ENCODE measurements at regions of chr7 and their contacts with region 1.

Region 1: DNA sequence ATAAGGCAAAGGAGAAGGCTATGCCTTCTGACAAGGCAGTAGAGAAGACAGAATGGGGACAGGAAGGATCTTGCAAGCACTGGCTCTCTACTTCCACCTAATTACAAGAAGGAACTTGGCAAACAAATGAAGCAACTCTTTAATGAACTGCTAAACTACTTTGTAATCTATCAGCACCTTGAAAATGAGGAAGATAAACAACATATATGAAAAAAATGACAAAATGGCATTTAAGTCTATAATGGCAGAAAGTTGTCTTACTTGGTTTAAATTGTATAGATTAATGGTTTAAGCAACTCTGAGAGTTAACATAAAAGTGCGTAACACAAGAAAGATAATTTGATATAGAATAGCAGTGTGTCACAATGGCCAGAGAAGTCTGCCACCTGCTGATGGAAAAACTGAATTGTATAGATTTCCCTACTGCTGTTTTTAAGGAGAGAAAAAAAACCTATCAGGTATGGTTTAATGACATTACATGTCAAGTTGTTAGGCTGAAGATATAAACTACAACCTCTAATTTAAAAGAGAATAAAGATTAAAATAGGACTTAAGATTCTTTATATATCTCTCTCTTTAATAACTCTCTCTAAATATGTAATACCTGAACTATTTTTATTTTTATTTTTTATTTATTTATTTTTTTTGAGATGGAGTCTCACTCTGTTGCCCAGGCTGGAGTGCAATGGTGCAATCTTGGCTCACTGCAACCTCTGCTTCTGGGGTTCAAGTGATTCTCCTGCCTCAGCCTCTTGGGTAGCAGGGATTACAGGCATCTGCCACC is 11.8 kb downstream of the NT5C3A start:
- DNase-seq: no peak
- ATAC-seq: peak in 6 of 8 donors; percentile 52 to 70 (median 62)
- H3K4me3 ChIP-seq: peak overlapping the region in 3 of 10 donors; percentile 9 to 28 (median 26)
- H3K27ac ChIP-seq: peak overlapping the region in 6 of 10 donors; percentile 14 to 77 (median 56)
- H3K4me1 ChIP-seq: peaks cover 0 to 59% (median 24%) of the 10 kb centered on the region in 9 donors
- H3K27me3 ChIP-seq: no peaks in the 10 kb centered on the region
- CTCF ChIP-seq: peak; percentile 24 to 80 (median 72)

Region 2: DNA sequence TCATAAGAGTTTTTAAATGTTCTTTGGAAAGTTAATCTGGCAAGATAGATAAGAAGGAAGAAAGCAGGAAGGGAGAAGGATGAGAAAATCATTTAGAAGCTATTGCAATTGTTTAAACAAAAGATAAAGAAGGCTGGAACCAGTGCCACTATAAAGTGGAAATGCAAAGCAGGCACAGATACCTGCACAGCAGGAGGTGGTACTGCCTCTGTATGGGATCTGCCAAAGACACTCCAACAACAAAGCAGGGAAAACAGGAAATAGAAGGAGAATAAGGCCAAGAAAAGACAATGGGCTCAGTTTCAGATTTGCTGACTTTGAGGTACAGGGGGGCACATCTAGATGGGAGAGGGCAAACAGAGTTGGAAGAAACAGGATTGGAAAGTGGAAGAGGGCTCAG is 1225.2 kb before region 1 on chr7:
- intact Hi-C with region 1: no loop called
- DNase-seq: no peak
- ATAC-seq: no peak
- H3K4me3 ChIP-seq: no peak overlapping the region
- H3K27ac ChIP-seq: no peak overlapping the region
- H3K4me1 ChIP-seq: peaks cover 0 to 9% (median 0%) of the 10 kb centered on the region in 9 donors
- H3K27me3 ChIP-seq: no peaks in the 10 kb centered on the region
- CTCF ChIP-seq: no peak

Region 3: GRCh38 chr7:32761451-32762205 is 289.1 kb before region 1 on chr7:
- intact Hi-C with region 1: loop called in 1 of 10 experiments (anchors 10 kb)
- DNase-seq: peak in 1 of 2 donors; percentile 18
- ATAC-seq: peak in 6 of 8 donors; percentile 10 to 86 (median 33)
- H3K4me3 ChIP-seq: peak overlapping the region in 1 of 10 donors; percentile 3
- H3K27ac ChIP-seq: peak overlapping the region in 7 of 10 donors; percentile 37 to 82 (median 57)
- H3K4me1 ChIP-seq: peaks cover 0 to 14% (median 5%) of the 10 kb centered on the region in 9 donors
- H3K27me3 ChIP-seq: peaks cover 0 to 26% (median 0%) of the 10 kb centered on the region in 7 donors
- CTCF ChIP-seq: no peak

Region 4: DNA sequence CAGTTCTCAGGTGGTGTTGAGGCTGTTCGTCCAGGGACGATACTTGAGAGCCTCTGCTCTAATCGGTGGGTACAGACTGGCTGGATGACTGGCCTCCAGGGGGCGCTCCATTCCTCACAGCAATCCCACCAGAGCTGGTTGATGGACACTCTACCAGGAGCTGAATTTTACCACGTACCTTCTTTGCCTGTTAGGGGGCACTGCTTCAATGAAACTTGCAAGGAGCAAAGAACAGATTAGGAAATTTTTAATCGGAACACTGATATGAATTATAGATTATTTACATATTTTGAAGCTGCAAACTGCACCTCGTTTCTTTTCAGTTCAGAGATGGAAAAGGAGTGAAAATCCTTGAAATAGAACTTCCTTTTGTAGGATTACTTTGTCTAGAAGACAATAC is 204.0 kb before region 1 on chr7:
- intact Hi-C with region 1: loop called in 1 of 10 experiments (anchors 5 kb)
- DNase-seq: peak; percentile 81 to 91
- ATAC-seq: peak; percentile 96 to 100 (median 98)
- H3K4me3 ChIP-seq: peak overlapping the region in 4 of 10 donors; percentile 3 to 16 (median 10)
- H3K27ac ChIP-seq: no peak overlapping the region
- H3K4me1 ChIP-seq: peaks cover 0 to 10% (median 3%) of the 10 kb centered on the region in 9 donors
- H3K27me3 ChIP-seq: no peaks in the 10 kb centered on the region
- CTCF ChIP-seq: peak; percentile 57 to 96 (median 94)

Region 5: DNA sequence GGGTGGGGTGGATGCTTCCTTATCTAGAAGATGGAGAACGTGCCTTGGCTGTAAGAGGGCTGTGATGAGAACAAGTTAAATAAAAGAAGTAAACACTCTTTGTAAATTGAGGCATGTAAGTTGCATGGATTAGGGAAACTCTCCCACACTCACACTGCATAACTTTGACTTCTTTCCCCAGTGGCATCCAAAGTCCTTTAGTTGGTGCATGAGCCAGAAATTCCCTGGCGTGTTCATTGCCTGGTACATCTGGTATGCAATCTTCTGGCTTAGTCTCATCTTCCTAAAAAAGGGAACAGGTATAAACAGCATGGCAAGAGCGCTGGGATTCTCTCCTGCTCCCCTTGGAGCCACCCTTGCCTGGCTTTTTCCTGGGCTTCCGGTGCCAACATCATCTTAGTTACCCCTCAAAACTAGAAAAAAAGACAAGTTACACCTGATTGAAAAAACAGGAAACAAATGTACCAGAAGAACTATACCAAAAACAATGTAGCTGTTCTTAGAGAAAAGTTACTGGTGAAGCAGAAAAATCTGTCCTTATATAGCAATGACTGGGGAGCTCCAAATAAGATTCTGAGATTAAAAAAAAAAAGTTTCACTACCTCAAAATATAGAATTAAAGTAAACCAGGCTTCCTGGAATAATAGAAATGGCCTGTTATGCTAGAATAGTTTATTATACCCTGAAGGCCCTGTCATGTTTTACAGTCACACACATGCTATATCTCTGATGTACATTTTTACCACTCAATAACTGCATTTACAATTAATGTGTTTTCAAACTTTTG is 48.6 kb after region 1 on chr7:
- intact Hi-C with region 1: no loop called
- DNase-seq: peak in 1 of 2 donors; percentile 18
- ATAC-seq: peak in 6 of 8 donors; percentile 48 to 88 (median 72)
- H3K4me3 ChIP-seq: no peak overlapping the region
- H3K27ac ChIP-seq: peak overlapping the region in 5 of 10 donors; percentile 24 to 67 (median 33)
- H3K4me1 ChIP-seq: peaks cover 0 to 29% (median 16%) of the 10 kb centered on the region in 9 donors
- H3K27me3 ChIP-seq: no peaks in the 10 kb centered on the region
- CTCF ChIP-seq: no peak

Region 6: DNA sequence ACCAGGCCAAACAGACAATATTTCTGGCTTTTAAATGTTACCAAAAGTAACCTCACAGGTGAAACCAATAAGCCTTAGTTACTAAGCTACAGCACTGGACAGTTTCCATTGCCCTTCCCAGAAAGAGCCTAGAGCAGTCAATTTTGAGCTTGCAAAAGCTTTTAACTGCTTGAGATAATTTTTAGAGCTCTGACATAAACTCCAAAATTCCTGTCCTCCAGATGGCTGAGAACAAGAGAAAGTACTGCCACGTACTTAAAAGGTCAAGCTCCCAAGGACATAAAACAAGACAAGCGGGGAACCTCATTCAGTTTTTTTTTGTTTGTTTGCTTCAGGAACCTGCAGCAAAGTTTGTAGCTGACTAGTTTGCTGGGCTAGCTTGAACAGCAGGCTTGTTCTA is 132.8 kb after region 1 on chr7:
- intact Hi-C with region 1: no loop called
- DNase-seq: no peak
- ATAC-seq: no peak
- H3K4me3 ChIP-seq: no peak overlapping the region
- H3K27ac ChIP-seq: no peak overlapping the region
- H3K4me1 ChIP-seq: peaks cover 0 to 7% (median 0%) of the 10 kb centered on the region in 9 donors
- H3K27me3 ChIP-seq: no peaks in the 10 kb centered on the region
- CTCF ChIP-seq: no peak

Region 7: GRCh38 chr7:34155220-34155908 is 1104.6 kb after region 1 on chr7:
- intact Hi-C with region 1: no loop called
- DNase-seq: no peak
- ATAC-seq: peak in 7 of 8 donors; percentile 42 to 85 (median 53)
- H3K4me3 ChIP-seq: no peak overlapping the region
- H3K27ac ChIP-seq: peak overlapping the region in 1 of 10 donors; percentile 41
- H3K4me1 ChIP-seq: peaks cover 0 to 9% (median 0%) of the 10 kb centered on the region in 9 donors
- H3K27me3 ChIP-seq: no peaks in the 10 kb centered on the region
- CTCF ChIP-seq: no peak

Measured in heart right ventricle (tissue), 16 donors.